ENCODE measurements at regions of chr14 and their contacts with region 1.

Region 1: GRCh38 chr14:76918751-76919543 is 92.7 kb downstream of the LRRC74A start:
- DNase-seq: peak; percentile 96
- H3K4me3 ChIP-seq: peak overlapping the region; percentile 23
- H3K27ac ChIP-seq: peak overlapping the region; percentile 98
- H3K27me3 ChIP-seq: no peaks in the 10 kb centered on the region
- CTCF ChIP-seq: no peak; the same call in 1 of the 2 replicates

Region 2: DNA sequence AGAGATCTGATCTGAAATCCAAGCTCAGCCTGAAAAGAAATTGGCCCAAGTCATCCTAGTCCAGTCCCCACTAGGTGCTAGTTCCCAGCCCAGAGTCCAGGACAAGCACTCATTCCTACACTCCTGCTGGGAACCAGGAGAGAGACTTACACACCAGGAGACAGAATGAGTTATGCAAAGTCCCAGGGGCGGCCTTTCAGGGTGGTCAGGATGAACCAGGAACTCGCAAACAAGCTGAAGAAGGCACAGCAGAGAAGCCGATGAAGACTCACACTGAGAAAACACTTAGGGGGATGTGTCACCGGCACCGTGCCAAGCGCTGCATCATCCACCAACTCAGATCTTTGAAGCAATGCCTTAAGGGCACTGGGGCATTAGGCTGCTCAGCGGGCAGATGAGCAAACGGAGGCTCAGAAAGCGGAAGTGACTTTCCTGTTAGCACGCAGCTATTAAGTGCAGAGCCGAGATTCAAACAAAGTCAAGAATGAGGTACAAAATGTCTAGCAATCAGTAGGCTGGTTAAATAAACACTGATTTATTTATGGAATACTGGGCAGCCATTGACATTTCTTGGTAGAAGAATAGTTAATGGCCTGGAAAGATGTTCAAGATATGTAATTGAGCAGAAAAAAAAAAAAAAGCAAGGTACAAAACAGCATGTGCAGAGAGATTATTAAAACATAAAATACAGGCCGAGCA is 14.1 kb before region 1 on chr14:
- CTCF ChIA-PET with region 1: interaction called, 52 read pairs
- POLR2A ChIA-PET with region 1: interaction called, 33 read pairs
- DNase-seq: peak; percentile 92
- H3K4me3 ChIP-seq: peak overlapping the region; percentile 42
- H3K27ac ChIP-seq: peak overlapping the region; percentile 99
- H3K27me3 ChIP-seq: no peaks in the 10 kb centered on the region
- CTCF ChIP-seq: no peak

Region 3: DNA sequence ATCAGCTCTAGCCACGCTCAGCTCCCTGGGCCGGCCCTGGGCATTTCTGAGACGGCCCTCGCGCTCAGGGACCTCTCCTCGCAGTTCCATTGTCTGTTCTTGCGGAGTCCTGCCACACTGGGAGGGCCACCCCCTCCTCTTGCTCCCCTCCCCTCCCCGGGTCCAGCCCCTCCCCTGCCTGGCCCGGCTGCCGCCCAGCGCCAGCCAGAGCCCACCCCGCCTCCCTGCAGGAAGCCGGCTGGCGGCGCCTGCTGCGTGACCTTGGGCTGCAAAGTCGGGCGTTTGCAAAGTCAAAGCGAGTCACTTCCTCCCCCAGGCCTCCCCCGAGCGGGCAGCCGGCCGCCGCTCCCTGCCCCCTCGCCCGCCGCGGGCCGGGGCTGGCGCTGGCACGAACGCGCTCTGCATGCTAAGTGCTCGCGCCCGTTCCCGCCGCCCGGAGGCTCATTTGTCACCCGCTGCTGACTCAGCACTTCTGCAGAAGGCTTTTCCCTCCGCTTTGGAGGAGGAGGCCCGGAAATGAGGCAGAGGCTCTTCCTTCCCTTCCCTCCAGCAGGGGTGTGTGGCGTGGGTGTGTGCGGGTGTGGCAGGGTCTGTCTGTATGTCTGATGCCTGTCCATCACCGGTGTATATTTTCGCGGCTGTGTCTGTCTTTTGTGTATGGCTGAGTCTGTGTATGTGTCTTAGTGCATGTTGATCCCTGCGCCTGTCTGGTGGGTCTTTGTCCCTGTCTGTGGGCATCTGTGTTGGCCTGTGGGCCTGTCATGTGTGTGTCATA is 37.6 kb after region 1 on chr14:
- CTCF ChIA-PET with region 1: interaction called, 26 read pairs
- POLR2A ChIA-PET with region 1: interaction called, 18 read pairs
- DNase-seq: peak; percentile 59
- H3K4me3 ChIP-seq: peak overlapping the region; percentile 37
- H3K27ac ChIP-seq: peak overlapping the region; percentile 86
- H3K27me3 ChIP-seq: no peaks in the 10 kb centered on the region
- CTCF ChIP-seq: no peak

Region 4: DNA sequence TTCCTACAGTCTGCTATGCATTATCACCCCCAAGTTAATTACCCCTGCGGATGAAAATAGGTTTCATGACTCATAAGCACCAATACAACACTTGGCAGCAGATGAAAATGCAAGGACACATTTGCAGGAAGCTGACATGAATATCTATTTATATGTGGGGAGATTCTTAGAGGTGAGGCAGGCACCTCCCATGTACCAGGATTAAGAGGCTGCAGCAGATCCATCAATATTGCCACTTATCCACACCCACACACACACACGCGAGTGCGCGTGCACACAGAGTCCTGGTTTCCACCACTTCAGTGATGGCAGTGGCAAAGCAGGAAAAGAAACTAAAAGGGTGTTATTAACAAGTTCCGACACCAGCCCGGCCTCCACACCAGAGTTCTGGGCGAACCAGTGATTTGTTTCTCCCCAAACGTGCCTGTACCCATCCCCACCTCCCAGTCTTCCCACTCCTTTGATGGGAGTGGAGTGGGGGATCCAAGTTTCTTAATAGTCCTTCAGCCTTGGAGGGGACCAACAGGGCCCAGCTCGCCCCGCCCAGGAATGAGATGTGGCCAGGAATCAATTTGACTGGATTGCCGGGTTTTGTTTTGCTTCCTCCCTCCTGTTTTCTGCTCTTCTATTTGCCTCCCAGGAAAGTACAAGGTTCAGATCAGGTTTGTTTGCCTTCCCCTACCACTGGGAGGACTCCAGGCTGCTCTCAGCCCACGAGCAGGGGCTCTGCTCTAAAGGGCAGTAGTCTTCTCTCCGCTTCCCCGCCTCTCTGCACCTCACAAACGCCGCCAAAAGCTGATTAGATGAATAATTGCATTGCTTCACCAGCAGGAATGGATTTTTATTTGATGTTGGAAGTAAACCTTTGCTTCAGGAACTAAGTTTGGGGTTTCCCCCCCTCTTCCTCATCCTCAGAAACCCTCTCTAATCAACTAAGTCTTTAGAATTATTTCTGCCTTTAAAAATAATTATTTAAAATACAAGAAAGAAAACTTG is 104.4 kb after region 1 on chr14:
- CTCF ChIA-PET with region 1: interaction called, 156 read pairs
- POLR2A ChIA-PET with region 1: interaction called, 45 read pairs
- DNase-seq: no peak
- H3K4me3 ChIP-seq: peak overlapping the region; percentile 94
- H3K27ac ChIP-seq: peak overlapping the region; percentile 39
- H3K27me3 ChIP-seq: no peaks in the 10 kb centered on the region
- CTCF ChIP-seq: peak; percentile 53

Region 5: DNA sequence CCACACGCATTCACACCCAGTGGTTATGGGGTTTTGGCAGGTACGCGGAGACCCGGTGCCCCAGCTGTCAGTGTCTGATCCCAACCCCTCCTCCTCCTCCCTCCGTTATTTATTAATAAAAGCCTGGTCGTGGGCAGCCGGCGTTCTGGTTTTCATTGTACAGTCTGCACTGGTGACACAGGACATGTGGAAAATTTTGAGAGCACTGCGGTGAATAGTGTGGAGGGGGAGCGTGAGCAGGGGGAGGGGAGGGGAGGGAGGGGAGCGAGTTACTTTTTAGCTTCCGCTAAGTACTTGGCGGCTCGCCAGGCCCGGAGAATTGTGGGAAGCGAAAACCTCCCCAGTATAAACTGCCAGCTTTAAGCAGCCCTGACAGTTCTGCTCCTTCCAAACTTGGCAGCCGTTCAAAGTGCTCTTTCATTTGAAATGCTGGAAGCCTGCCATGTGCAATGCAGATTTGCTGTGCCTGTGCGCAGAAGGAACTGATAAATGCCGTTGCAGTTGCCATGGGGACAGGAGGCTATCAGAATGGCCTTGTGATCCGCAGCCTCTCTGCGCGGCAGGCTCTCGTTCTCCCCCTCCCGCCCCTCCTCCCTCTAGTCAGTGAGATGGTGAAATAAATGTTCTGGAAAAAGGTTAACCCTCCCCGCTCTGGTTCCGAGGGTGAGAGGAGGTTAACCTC is 121.3 kb after region 1 on chr14:
- CTCF ChIA-PET with region 1: interaction called, 33 read pairs
- POLR2A ChIA-PET with region 1: interaction called, 27 read pairs
- DNase-seq: peak; percentile 97
- H3K4me3 ChIP-seq: peak overlapping the region; percentile 51
- H3K27ac ChIP-seq: peak overlapping the region; percentile 99
- H3K27me3 ChIP-seq: no peaks in the 10 kb centered on the region
- CTCF ChIP-seq: no peak

Region 6: DNA sequence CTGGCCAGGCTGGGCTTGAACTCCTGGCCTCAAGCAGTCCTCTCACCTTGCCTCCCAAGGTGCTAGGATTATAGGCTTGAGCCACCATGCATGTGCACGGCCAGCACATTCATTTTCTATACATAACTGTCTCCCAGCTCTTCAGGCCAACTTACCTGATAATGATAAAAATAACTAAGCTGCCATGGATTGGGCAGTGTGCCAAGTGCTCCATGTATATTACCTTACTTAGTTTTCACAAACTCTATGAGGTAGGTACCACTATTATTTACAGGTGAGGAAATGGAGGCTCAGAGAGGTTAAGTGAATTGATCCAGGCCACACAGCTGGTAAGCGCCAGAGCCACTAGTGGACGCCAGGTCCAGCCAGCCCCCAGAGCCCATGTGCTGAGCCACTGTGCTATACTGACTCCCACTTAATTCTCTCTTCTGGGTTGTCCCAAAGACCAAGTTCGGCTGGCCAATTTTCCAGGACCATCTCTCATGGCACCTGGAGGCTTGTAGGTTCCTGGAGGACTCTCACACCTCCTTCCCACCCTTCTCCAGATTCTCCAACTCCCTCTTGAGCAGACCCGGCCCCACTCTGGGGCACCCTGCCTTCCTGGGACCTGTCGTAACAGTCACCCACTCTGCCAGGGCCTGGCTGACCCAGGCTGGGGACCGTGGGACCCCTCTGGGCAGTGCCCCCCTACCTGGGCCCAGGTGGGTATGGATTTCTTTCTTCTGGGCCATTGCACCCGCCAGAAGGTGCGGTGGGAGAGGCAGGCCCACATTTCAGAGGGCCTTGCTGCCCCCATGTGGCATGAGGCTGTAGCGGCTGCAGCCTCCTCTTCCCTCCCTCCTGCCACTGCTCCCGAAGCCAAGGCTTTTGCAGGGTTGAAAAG is 148.9 kb after region 1 on chr14:
- CTCF ChIA-PET with region 1: interaction called, 195 read pairs
- POLR2A ChIA-PET with region 1: interaction called, 5 read pairs
- DNase-seq: peak; percentile 30
- H3K4me3 ChIP-seq: no peak overlapping the region
- H3K27ac ChIP-seq: no peak overlapping the region
- H3K27me3 ChIP-seq: no peaks in the 10 kb centered on the region
- CTCF ChIP-seq: peak; percentile 90

Region 7: DNA sequence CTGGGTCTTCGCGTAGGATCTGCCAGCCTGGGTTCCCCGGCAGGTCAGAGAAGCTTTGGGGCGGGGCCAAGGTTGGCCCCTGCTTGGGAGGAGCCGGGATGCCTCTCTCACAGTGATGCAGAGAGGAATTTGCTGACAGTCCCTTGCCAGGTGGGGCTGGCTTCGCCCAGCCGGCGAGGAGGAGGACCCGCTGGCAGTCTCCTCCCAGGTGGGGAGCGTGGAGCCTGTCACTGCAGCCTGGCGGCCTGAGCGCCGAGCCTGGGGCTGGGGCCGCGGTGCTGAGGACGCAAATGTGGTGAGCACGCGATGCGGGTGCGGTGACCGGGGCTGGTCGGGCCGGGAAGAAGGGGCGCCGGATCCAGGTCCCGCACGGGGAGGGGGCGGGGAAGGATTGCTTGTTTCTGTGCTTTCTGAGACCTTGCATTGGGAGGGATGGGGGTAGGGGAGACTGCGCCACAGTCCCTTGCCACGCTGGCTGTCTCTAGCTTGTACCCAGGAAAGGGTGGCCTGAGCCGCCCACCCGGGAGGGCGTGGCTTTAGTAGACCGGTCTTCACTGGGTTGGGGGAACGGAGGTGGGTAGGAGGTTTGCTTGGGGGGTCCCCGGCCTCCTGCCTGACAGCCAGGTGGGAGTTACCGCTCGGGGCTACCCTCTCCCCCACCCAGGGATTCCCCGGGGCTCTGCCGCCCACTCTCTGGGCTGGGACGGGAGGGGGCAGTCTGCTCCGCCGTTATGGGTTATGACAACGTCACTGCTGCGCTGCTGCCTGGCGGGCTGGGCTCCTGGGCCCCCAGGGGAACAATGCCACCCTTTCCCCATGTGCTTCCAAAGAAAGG is 262.9 kb after region 1 on chr14 and contains the start of gene TMEM63C:
- CTCF ChIA-PET with region 1: no interaction called
- POLR2A ChIA-PET with region 1: no interaction called
- DNase-seq: no peak
- H3K4me3 ChIP-seq: no peak within 1 kb of the TSS
- H3K27ac ChIP-seq: no peak within 1 kb of the TSS
- H3K27me3 ChIP-seq: peaks cover 23% of the 10 kb centered on the region
- CTCF ChIP-seq: no peak
- polyA plus RNA-seq, gene TMEM63C: not detected in 2 replicates